ENCODE measurements at regions of chr19 and their contacts with region 1.

Region 1: GRCh38 chr19:40609561-40610395 is 8.6 kb downstream of the LTBP4 start:
- DNase-seq: no peak
- ATAC-seq: no peak
- H3K4me3 ChIP-seq: no peak overlapping the region
- H3K27ac ChIP-seq: no peak overlapping the region
- H3K4me1 ChIP-seq: peaks cover 26% of the 10 kb centered on the region
- H3K27me3 ChIP-seq: no peaks in the 10 kb centered on the region
- CTCF ChIP-seq: no peak

Region 2: DNA sequence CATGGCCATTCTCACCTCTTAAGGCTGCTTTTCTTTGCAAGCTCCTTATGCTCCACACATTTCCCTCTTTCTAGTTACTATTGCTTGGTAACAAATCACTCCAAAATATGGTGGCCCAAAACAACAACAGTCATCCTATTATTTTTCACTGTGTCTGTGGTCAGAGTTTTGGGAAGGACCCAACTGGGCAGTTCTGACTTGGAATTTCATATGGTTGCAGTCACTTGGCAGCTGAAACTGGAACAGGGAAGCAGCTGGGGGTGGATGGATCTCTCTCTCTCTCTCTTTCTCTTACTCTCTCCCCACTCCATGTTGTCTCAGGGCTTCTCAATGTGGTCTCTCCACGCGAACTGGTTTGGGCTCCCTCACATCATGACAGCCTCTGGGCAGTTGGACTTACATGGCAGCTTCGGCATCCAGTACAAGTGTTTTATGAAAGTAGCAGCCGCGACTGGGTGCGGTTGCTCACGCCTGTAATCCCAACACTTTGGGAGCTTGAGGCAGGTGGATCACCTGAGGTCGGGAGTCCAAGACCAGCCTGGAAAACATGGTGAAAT is 41.0 kb after region 1 on chr19:
- CTCF ChIA-PET with region 1: interaction called, 4 read pairs
- POLR2A ChIA-PET with region 1: interaction called, 19 read pairs
- intact Hi-C with region 1: no loop called
- DNase-seq: no peak
- ATAC-seq: no peak
- H3K4me3 ChIP-seq: no peak overlapping the region
- H3K27ac ChIP-seq: no peak overlapping the region
- H3K4me1 ChIP-seq: peaks cover 8% of the 10 kb centered on the region
- H3K27me3 ChIP-seq: no peaks in the 10 kb centered on the region
- CTCF ChIP-seq: no peak

Region 3: DNA sequence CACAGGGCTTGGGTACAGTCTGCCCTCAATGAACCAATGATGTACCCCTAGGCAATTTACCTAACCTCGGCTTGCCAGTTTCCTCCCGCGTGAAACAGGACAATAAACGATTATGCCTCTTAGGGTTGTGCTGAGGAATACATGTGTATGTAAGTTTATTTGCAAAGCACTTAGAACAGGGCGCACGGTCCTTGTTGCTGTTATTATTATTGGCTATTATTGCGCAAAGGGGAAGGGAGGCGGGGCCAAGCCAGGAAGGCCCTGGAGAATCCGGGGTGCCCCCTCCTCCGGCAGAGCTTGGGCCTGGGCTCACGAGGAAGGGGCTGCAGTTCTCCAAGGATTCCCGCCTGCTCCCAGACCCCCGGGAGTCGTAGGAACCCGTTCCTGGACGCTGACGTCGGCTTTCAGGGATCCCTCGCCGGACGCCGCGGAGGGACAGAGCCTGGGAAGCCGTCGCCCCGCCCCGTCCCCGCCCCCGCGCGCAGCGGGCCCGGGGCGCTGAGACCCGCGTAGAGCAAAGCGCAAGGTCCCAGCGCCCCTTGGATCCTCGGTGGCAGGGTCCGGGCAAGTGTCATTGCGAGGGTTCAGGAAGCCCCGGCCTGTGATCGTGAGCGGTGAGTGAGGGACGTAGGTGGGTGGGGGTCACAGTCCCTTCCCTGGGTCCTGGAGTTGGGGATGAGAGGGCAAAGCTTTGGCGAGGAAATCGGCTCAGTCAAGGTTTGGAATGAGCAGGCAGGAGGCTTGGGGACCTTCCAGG is 766.6 kb after region 1 on chr19 and contains the start of gene TMEM91:
- CTCF ChIA-PET with region 1: no interaction called
- POLR2A ChIA-PET with region 1: no interaction called
- intact Hi-C with region 1: no loop called
- DNase-seq: no peak
- ATAC-seq: no peak
- H3K4me3 ChIP-seq: no peak within 1 kb of the TSS
- H3K27ac ChIP-seq: no peak within 1 kb of the TSS
- H3K4me1 ChIP-seq: no peaks in the 10 kb centered on the region
- H3K27me3 ChIP-seq: no peaks in the 10 kb centered on the region
- CTCF ChIP-seq: no peak
- total RNA-seq, gene TMEM91: 2.4 and 3.6 TPM in 2 replicates

Measured in PC-3 (cell line).